OCI-LY7 (cell line): ENCODE measurements at regions of chr19 and their contacts with region 1.

Region 1: GRCh38 chr19:2269244-2269947 is 12.6 kb downstream of the PEAK3 start:
- DNase-seq: peak; percentile 96
- H3K4me3 ChIP-seq: peak overlapping the region; percentile 87
- H3K27ac ChIP-seq: peak overlapping the region; percentile 93
- H3K4me1 ChIP-seq: peaks cover 53% of the 10 kb centered on the region
- CTCF ChIP-seq: no peak; the same call in 1 of the 2 replicates

Region 2: DNA sequence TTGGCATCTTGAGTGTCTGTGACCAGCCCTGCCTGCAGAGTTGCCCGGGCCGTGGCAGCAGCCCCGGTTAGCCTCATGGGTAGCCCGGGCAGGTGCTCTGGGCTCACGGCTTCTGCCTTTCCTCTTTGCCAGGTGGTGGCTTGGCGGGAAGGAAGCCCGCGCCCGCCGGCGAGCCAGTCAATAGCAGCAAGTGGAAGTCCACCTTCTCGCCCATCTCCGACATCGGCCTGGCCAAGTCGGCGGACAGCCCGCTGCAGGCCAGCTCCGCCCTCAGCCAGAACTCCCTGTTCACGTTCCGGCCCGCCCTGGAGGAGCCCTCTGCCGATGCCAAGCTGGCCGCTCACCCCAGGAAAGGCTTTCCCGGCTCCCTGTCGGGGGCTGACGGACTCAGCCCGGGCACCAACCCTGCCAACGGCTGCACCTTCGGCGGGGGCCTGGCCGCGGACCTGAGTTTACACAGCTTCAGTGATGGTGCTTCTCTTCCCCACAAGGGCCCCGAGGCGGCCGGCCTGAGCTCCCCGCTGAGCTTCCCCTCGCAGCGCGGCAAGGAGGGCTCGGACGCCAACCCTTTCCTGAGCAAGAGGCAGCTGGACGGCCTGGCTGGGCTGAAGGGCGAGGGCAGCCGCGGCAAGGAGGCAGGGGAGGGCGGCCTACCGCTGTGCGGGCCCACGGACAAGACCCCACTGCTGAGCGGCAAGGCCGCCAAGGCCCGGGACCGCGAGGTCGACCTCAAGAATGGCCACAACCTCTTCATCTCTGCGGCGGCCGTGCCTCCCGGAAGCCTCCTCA is 43.2 kb before region 1 on chr19:
- CTCF ChIA-PET with region 1: no interaction called
- POLR2A ChIA-PET with region 1: no interaction called
- intact Hi-C with region 1: no loop called
- DNase-seq: no peak
- H3K4me3 ChIP-seq: no peak overlapping the region
- H3K27ac ChIP-seq: no peak overlapping the region
- H3K4me1 ChIP-seq: peaks cover 55% of the 10 kb centered on the region
- CTCF ChIP-seq: no peak

Region 3: GRCh38 chr19:2236314-2237050 is 32.9 kb before region 1 on chr19 and contains the starts of genes PLEKHJ1 and SF3A2:
- CTCF ChIA-PET with region 1: no interaction called
- POLR2A ChIA-PET with region 1: interaction called, 3 read pairs
- intact Hi-C with region 1: loop called (anchors 1 kb)
- DNase-seq: peak; percentile 99
- H3K4me3 ChIP-seq: peak within 1 kb of the TSS; percentile 96
- H3K27ac ChIP-seq: peak within 1 kb of the TSS; percentile 75
- H3K4me1 ChIP-seq: peaks cover 68% of the 10 kb centered on the region
- CTCF ChIP-seq: peak; percentile 97
- total RNA-seq, gene PLEKHJ1: 205 and 221 TPM in 2 replicates
- total RNA-seq, gene SF3A2: 104 and 124 TPM in 2 replicates

Region 4: GRCh38 chr19:2253106-2254053 is 16.0 kb before region 1 on chr19:
- CTCF ChIA-PET with region 1: interaction called, 4 read pairs
- POLR2A ChIA-PET with region 1: interaction called, 5 read pairs
- intact Hi-C with region 1: loop called (anchors 1 kb)
- DNase-seq: peak; percentile 78
- H3K4me3 ChIP-seq: peak overlapping the region; percentile 47
- H3K27ac ChIP-seq: no peak overlapping the region
- H3K4me1 ChIP-seq: peaks cover 43% of the 10 kb centered on the region
- CTCF ChIP-seq: peak; percentile 76

Region 5: DNA sequence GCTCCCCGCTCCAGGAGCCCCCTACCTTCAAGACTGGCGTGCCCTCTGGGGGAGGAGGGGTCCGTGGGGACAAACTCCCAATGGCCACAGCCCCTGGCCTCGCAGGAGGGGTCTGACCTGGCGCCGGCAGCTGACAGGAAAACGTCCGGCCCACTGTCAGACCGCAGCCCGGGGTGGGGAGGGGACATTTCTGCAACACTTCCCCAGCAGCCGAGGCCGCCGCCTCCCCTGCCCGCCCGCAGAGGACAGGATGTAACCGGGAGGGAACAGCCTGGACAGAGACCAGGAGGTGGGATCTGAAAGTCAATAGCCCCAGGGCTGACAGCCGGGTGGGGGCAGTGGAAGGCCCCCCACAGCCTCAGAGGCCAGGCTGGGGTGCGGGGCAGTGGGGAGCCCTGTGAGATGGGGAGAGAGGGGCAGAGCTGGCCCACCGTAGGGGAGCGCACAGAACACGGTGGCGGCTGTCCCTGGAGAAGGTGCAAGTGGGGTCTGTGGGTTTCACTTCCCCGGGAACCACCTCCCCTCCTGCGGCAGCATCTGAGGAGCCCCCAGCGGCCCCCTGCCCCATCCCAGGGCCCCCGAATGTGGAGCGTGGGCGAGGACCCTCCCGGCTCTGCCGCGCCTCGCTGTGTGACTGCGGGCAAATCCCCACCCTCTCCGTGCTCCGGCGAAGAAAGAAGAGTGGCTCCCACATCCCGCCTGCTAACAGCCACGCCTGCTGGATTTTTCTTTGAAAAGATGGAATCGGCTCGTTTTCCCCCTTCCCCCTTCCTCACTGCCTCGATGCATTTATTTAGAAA is 12.9 kb after region 1 on chr19 and contains the start of gene PEAK3:
- CTCF ChIA-PET with region 1: no interaction called
- POLR2A ChIA-PET with region 1: no interaction called
- intact Hi-C with region 1: no loop called
- DNase-seq: no peak
- H3K4me3 ChIP-seq: no peak within 1 kb of the TSS
- H3K27ac ChIP-seq: no peak within 1 kb of the TSS
- H3K4me1 ChIP-seq: peaks cover 16% of the 10 kb centered on the region
- CTCF ChIP-seq: no peak
- total RNA-seq, gene PEAK3: not detected in 2 replicates

Region 6: GRCh38 chr19:2302319-2303210 is 33.2 kb after region 1 on chr19:
- CTCF ChIA-PET with region 1: no interaction called
- POLR2A ChIA-PET with region 1: no interaction called
- intact Hi-C with region 1: no loop called
- DNase-seq: no peak
- H3K4me3 ChIP-seq: no peak overlapping the region
- H3K27ac ChIP-seq: no peak overlapping the region
- H3K4me1 ChIP-seq: peaks cover 10% of the 10 kb centered on the region
- CTCF ChIP-seq: no peak

Region 7: GRCh38 chr19:2328401-2329148 is 59.2 kb after region 1 on chr19 and contains the starts of genes LSM7 and SPPL2B:
- CTCF ChIA-PET with region 1: no interaction called
- POLR2A ChIA-PET with region 1: no interaction called
- intact Hi-C with region 1: loop called (anchors 2 kb)
- DNase-seq: peak; percentile 95
- H3K4me3 ChIP-seq: peak within 1 kb of the TSS; percentile 89
- H3K27ac ChIP-seq: peak within 1 kb of the TSS; percentile 70
- H3K4me1 ChIP-seq: peaks cover 65% of the 10 kb centered on the region
- CTCF ChIP-seq: no peak
- total RNA-seq, gene LSM7: 288 and 321 TPM in 2 replicates
- total RNA-seq, gene SPPL2B: 96.9 and 106 TPM in 2 replicates

Region 8: GRCh38 chr19:2391118-2391725 is 121.8 kb after region 1 on chr19:
- CTCF ChIA-PET with region 1: no interaction called
- POLR2A ChIA-PET with region 1: interaction called, 4 read pairs
- intact Hi-C with region 1: loop called (anchors 1 kb)
- DNase-seq: peak; percentile 86
- H3K4me3 ChIP-seq: no peak overlapping the region
- H3K27ac ChIP-seq: no peak overlapping the region
- H3K4me1 ChIP-seq: peaks cover 22% of the 10 kb centered on the region
- CTCF ChIP-seq: peak; percentile 92